Heart left ventricle (tissue), 16 donors: ENCODE measurements at regions of chr19 and their contacts with region 1.

Region 1: GRCh38 chr19:8208922-8209461 is at the start of gene CERS4:
- DNase-seq: peak; percentile 78 to 90 (median 79)
- ATAC-seq: peak; percentile 73 to 96 (median 88)
- H3K4me3 ChIP-seq: peak within 1 kb of the TSS; percentile 55 to 99 (median 82)
- H3K27ac ChIP-seq: peak within 1 kb of the TSS; percentile 40 to 90 (median 78)
- H3K4me1 ChIP-seq: peaks cover 0 to 27% (median 9%) of the 10 kb centered on the region in 12 donors
- H3K27me3 ChIP-seq: peaks cover 0 to 8% (median 0%) of the 10 kb centered on the region in 9 donors
- CTCF ChIP-seq: no peak
- POLR2A ChIP-seq: no peak
- total RNA-seq, gene CERS4: 13.6 to 25.6 (median 20.6) TPM

Region 2: DNA sequence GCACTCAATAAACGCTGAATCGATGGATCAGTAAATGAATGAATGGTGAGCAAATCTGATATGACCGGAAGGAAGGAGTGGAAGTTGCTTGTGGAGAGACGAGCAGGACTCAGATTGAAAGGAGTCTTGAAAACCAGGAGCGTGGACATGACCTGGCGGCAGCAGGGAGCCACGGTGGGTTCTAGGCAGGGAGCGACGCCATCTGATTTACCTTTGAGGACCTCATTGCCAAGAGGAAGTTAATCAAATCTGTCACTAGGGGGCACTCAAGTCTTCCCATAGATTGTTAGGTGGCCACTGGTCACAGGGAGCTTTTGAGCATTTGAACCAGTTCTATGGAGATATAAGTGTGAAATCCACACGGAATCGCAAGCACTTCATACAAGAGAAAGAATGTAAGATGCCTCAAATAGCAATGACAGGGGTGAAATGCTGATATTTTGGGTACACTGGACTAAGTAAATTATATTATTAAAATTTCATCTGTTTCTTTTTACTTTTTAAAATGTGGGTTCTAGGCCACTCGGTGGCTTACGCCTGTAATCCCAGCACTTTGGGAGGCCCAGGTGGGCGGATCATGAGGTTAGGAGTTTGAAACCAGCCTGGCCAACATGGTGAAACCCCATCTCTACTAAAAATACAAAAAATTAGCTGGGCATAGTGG is 50.4 kb before region 1 on chr19:
- intact Hi-C with region 1: loop called in 2 of 10 experiments (anchors 2 to 5 kb)
- DNase-seq: peak in 4 of 5 donors; percentile 42 to 61 (median 50)
- ATAC-seq: peak; percentile 40 to 67 (median 60)
- H3K4me3 ChIP-seq: no peak overlapping the region
- H3K27ac ChIP-seq: no peak overlapping the region
- H3K4me1 ChIP-seq: peaks cover 0 to 15% (median 9%) of the 10 kb centered on the region in 12 donors
- H3K27me3 ChIP-seq: no peaks in the 10 kb centered on the region
- CTCF ChIP-seq: peak; percentile 59 to 81 (median 75)
- POLR2A ChIP-seq: no peak

Region 3: DNA sequence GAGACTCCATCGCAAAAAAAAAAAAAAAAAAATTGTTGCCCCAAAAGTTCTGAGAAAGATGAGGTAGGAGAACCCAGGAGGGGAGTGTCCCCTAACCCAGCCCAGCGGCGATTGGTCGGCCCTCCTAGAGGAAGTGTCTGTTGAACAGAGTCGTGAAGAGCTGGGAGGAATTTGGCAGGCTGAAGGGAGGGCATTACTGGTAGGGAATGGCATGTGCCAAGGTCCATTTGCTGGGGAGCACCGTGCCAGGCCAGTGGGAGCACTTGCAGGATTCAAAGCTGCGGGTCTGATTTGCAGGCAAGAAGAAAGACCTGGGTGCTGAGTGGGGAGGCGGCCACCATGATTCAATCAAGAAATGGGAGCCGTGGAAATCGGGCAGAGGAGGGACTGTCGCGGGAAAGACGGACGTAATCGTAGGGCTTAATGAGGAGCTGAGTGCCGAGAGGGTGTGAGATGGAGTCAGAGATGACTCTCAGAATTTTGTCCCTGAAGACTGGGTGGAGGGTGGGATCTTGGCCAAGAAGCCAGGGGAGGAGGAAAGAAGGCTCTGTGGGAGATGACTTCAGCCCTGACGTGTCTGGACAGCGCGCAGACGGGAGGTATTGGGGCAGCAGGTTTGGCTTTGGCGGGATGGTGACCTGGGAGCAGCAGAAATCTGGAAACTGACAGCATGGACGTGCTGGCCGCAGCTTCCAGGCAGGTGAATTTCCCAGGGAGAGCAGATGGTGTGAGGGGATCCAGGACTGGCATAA is 15.6 kb after region 1 on chr19:
- intact Hi-C with region 1: no loop called
- DNase-seq: peak in 4 of 5 donors; percentile 24 to 73 (median 52)
- ATAC-seq: peak; percentile 55 to 82 (median 78)
- H3K4me3 ChIP-seq: no peak overlapping the region
- H3K27ac ChIP-seq: peak overlapping the region in 3 of 12 donors; percentile 5 to 23 (median 12)
- H3K4me1 ChIP-seq: peaks cover 0 to 23% (median 4%) of the 10 kb centered on the region in 12 donors
- H3K27me3 ChIP-seq: no peaks in the 10 kb centered on the region
- CTCF ChIP-seq: no peak
- POLR2A ChIP-seq: no peak

Region 4: DNA sequence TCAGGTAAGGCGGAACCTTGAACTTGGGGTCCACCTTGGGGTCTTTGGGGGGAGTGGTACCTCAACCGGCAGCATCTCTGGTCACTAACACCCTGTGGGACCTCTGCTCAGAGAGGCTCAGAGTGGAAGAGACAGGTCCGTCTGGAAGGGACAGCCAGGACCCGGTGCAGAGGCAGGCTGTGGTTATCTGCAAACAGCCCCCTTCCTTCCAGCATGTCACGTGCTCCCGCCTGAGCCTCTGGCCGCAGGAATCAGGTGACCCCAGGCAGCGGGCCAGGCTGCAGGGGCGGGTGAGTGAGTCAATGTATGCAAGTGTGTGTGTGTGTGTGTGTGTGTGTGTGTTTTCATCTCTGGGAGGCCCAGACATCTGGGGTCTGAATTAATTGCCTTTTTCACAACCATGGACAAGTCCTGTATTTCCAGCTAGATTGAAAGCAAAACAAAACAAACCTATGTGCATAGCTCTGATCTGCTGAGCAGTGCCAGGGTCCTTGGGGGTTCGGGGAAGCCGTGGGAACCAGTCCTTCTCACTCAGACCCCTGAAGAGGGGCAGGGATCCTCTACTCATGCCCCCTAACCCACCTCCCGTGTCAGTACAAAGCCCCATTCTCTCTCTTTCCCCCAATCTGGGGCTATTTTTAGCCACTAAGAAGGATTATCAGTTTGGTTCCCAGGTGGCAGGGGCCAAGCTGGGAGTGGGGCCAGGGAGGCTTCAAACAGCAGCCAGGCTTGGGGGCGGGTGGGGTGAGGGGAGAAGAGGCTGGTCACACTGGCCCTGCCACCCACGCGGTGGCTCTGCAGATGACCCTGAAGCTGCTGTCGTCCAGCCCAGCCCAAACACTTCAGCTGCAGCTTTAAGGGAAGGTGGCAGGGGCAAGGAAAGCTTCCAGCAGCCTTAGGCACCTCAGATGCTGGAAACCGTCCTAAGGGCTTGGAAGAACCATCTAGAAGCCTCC is 31.6 kb after region 1 on chr19:
- intact Hi-C with region 1: loop called in 2 of 10 experiments (anchors 5 kb)
- DNase-seq: peak; percentile 88 to 95 (median 92)
- ATAC-seq: peak; percentile 87 to 92 (median 90)
- H3K4me3 ChIP-seq: peak overlapping the region in 8 of 12 donors; percentile 5 to 38 (median 22)
- H3K27ac ChIP-seq: peak overlapping the region; percentile 68 to 94 (median 86)
- H3K4me1 ChIP-seq: peaks cover 4 to 38% (median 20%) of the 10 kb centered on the region in 12 donors
- H3K27me3 ChIP-seq: no peaks in the 10 kb centered on the region
- CTCF ChIP-seq: no peak
- POLR2A ChIP-seq: no peak

Region 5: DNA sequence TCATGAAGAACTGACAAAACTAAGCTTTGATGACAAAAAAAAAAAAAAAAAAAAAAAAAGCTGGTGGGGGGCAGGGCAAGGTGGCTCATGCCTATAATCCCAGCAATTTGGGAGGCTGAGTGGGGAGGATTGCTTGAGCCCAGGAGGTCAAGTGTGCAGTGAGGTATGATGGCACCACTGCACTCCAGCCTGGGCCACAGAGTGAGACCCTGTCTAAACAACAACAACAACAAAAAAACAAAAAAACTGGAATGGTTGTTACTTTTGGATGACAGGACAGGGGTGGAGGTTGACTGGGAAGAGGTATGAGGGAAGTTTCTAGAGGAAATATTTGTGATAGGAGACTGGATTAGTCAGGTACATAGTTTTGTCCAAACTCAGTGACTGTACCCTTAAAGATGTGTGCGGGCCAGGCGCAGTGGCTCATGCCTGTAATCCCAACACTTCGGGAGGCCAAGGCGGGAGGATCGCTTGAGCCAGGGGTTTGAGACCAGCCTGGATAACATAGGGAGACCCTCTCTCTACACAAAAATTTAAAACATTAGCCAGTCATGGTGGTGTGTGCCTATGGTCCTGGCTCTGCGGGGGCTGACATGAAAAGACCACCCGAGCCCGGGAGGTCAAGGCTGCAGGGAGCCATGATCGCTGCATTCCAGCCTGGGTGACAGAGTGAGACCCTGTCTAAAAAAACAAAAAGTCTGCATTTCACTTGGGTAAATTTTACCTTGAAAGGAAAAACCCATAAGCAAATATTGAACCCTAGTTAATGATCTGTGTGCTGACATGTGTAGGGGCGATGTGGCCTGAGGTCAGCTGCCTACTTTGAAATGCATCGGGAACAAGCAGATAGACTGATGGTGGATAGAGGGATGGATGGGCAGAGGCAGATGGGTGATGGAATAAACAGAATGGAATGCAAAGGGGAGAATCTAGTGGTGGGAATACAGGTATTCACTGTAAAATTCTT is 37.2 kb after region 1 on chr19:
- intact Hi-C with region 1: loop called in 4 of 10 experiments (anchors 1 to 5 kb)
- DNase-seq: no peak
- ATAC-seq: no peak
- H3K4me3 ChIP-seq: no peak overlapping the region
- H3K27ac ChIP-seq: no peak overlapping the region
- H3K4me1 ChIP-seq: peaks cover 0 to 16% (median 5%) of the 10 kb centered on the region in 12 donors
- H3K27me3 ChIP-seq: no peaks in the 10 kb centered on the region
- CTCF ChIP-seq: no peak
- POLR2A ChIP-seq: no peak